ENCODE measurements at regions of chr2 and their contacts with region 1.

Region 1: DNA sequence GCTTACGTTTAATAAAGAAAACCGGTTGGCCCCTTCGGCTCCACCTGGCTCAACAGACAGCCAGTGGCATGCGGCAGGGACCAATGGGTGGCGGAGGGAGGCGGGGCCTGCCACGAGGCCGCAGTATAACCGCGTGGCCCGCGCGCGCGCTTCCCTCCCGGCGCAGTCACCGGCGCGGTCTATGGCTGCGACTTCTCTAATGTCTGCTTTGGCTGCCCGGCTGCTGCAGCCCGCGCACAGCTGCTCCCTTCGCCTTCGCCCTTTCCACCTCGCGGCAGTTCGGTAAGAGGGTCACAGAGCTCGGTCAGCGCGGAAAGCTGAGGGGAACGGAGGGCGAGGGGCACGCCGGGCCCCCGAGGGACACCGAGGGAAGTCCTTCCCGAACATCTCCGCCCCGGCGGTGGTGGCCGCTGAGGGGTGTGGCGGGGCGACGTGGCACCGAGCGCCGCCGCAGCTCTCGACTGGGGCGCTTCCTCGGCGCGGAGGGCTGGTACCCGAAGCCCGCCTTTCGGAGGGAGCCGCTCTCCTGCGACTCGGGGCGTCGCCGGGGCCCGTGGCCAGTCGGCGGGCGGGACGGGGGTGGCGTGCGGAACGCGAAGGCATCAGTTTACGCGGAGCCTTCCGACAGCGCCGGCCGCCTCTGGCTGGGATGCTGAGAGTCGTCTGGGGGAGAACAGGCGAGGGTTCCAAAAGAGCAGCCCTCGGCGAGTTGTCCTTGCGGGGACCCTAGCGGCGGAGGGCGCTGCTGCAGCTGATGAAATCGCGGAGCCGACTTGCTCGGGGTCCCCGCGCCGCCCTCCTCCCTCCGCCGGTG is at the start of gene MTHFD2:
- DNase-seq: peak; percentile 69 to 92 (median 84)
- H3K4me3 ChIP-seq: peak within 1 kb of the TSS; percentile 59 to 93 (median 80)
- H3K27ac ChIP-seq: peak within 1 kb of the TSS in 55 of 59 donors; percentile 32 to 92 (median 76)
- H3K27me3 ChIP-seq: no peaks in the 10 kb centered on the region
- CTCF ChIP-seq: peak; percentile 34 to 80 (median 63)
- total RNA-seq, gene MTHFD2: 3.9 to 33.5 (median 9.8) TPM

Region 2: GRCh38 chr2:74178201-74179062 is 20.2 kb before region 1 on chr2 and contains the start of gene MOB1A:
- intact Hi-C with region 1: loop called (anchors 2 kb)
- DNase-seq: peak; percentile 90 to 99 (median 98)
- H3K4me3 ChIP-seq: peak within 1 kb of the TSS; percentile 56 to 96 (median 87)
- H3K27ac ChIP-seq: peak within 1 kb of the TSS in 58 of 59 donors; percentile 54 to 95 (median 88)
- H3K27me3 ChIP-seq: no peaks in the 10 kb centered on the region
- CTCF ChIP-seq: peak in 38 of 56 donors; percentile 23 to 77 (median 53)
- total RNA-seq, gene MOB1A: 19.4 to 66.5 (median 35.5) TPM

Measured in dorsolateral prefrontal cortex (tissue), 120 donors.